HCT116 (cell line): ENCODE measurements at regions of chr12 and their contacts with region 1.

Region 1: DNA sequence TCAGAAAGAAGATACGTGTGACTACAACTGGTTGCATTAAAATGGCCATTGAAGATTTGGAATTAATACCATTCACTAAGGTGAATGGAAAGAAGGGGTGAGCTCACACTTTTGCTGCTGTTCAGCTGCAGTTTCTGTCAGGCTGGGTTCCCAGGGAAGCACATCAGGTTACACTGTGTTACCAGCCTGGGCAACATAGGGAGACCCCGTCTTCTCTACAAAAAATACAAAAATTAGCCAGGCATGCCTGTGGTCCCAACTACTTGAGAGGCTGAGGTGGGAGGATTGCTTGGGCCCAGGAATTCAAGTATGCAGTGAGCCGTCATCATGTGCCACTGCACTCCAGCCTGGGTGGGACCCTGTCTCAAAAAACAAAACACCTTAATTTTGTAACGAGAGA is 12.9 kb upstream of the ZCCHC8 start:
- DNase-seq: no peak
- ATAC-seq: no peak
- H3K4me3 ChIP-seq: no peak overlapping the region
- H3K27ac ChIP-seq: no peak overlapping the region
- H3K4me1 ChIP-seq: no peaks in the 10 kb centered on the region
- H3K27me3 ChIP-seq: no peaks in the 10 kb centered on the region
- CTCF ChIP-seq: no peak
- POLR2A ChIP-seq: no peak
- RAD21 ChIP-seq: no peak

Region 2: DNA sequence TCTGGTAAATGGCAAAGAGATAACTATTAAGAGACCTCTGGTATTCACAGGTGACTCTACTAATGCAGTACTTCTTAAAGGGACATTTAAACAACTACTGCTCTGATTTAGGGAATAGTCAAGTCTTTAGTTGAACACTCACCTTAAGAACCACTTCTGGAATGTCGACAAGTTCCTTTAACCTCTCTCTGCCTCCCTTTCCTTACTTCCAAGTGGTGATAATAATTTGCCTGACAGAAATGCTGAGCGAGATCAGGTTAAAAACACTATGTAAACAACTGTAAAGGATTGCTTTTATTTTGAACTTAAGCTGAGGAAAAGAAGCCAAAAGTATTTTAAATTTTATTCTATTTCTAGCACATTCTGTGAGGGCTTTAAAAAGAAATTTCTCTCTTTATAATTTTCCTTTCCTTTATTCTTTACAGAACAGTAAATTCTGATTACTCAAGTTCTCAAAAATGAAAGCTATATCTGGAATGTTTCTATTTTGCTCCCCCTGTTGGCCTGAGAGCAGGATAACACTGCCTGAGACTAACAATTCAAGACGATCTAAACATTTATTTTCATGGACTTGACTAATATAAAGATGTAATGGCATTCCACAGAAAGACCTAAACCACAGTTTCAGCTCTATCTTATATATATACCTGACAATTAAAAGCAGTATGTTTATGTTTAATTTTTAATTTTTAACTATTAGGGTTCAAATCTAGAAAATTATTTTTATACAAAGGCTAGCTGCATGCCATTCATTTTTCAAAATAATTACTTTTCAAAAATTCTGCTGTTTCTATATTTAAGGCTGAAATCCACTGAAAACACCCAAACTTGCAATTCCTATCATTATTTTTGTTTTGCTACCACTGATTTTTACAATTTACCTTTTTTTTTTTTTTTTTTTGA is 42.1 kb before region 1 on chr12:
- CTCF ChIA-PET with region 1: no interaction called
- POLR2A ChIA-PET with region 1: no interaction called
- RAD21 ChIA-PET with region 1: no interaction called
- intact Hi-C with region 1: no loop called
- DNase-seq: peak; percentile 42
- ATAC-seq: peak; percentile 67; the same call in 1 of the 2 replicates
- H3K4me3 ChIP-seq: no peak overlapping the region
- H3K27ac ChIP-seq: no peak overlapping the region
- H3K4me1 ChIP-seq: peaks cover 0 to 10% of the 10 kb centered on the region in 2 experiments; a peak in 2 of 4 replicates
- H3K27me3 ChIP-seq: no peaks in the 10 kb centered on the region
- CTCF ChIP-seq: peak; percentile 67 to 78 (median 77)
- POLR2A ChIP-seq: no peak
- RAD21 ChIP-seq: peak; percentile 81

Region 3: DNA sequence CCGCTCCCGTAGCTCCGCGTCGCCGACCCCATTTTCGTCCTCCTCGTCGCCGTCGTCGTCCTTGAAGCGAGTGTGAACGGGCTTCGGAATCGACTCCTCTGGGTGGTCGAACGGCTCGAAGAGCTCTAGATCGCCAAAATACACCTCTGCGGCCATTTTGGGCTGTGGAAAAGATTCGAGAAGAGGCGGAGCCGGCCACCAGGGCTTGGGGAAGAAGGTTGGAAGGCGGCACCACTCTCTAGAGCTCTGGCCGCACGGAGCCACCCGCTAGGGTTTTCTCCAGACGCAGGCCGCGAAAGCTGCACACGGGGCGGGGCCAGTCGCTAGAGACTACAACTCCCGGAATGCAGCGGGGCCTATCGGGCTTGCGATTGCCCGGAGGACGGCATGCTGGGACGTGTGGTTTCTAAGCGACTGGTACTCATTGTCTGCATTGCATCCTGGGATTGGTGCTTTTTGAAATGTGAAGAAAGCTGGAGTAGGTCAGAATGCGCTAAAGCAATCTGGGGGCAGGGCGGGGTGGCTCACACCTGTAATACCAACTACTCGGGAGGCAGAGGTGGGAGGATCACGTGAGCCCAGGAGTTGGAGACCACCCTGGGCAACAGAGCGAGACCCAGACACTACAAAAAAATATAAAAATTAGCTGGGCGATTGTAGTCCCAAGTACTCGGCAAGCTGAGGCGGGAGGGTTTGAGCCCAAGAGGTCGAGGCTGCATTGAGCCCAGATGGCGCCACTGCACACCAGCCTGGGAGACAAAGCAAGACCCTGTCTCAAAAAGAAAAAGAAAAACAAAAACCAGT is 12.8 kb before region 1 on chr12 and contains the start of gene ZCCHC8:
- CTCF ChIA-PET with region 1: no interaction called
- POLR2A ChIA-PET with region 1: interaction called, 14 read pairs
- RAD21 ChIA-PET with region 1: no interaction called
- intact Hi-C with region 1: no loop called
- DNase-seq: peak; percentile 96
- ATAC-seq: peak; percentile 97
- H3K4me3 ChIP-seq: peak within 1 kb of the TSS; percentile 70 to 94
- H3K27ac ChIP-seq: peak within 1 kb of the TSS; percentile 86
- H3K4me1 ChIP-seq: peaks cover 10 to 19% of the 10 kb centered on the region in 2 experiments; a peak in 3 of 4 replicates
- H3K27me3 ChIP-seq: no peaks in the 10 kb centered on the region
- CTCF ChIP-seq: peak in 2 of 3 experiments; percentile 26; a peak in 3 of 6 replicates
- POLR2A ChIP-seq: peak; percentile 78
- RAD21 ChIP-seq: no peak
- total RNA-seq, gene ZCCHC8: 30.5 TPM

Region 4: DNA sequence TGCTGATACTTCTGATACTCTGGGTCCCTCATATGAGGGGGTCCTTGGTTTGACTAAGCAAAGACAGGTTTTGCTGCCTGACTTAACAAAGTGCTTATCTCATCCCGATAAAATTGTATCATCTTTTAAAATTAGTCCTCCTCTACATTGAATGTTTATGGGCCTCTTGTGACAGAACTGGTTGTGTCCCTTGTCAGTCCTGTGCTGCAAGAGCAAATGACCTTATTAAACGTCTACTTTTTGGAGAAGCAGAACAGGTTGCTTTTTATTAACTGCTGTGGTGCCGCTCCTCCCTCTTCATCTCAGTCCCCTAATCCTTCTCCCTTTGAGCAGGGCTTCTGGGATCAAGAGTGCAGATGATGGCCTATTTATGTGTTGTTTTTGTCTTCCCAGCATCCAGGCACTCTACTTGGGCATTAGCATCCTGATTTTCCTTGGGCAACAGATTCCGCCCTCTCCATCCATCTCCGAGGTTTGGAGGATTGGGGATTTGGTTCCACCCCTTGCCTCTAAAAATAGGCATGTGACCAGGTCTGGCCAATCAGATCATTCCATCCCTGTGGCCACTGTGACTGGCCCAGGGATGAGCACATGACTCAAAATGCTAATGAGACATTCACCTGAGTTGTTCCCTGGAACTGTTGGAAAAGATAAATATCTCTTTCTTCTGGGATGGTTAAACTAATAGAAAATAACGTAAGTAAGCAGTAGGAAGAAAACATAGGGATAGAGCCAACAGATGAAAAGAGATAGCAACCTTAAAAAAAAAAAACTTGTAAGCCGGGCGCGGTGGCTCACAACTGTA is 236.1 kb after region 1 on chr12:
- CTCF ChIA-PET with region 1: no interaction called
- POLR2A ChIA-PET with region 1: no interaction called
- RAD21 ChIA-PET with region 1: no interaction called
- intact Hi-C with region 1: no loop called
- DNase-seq: no peak
- ATAC-seq: no peak
- H3K4me3 ChIP-seq: no peak overlapping the region
- H3K27ac ChIP-seq: no peak overlapping the region
- H3K4me1 ChIP-seq: peaks cover 5 to 14% of the 10 kb centered on the region in 2 experiments; a peak in 3 of 4 replicates
- H3K27me3 ChIP-seq: no peaks in the 10 kb centered on the region
- CTCF ChIP-seq: no peak
- POLR2A ChIP-seq: no peak
- RAD21 ChIP-seq: no peak